Naive thymus-derived CD4-positive, alpha-beta T cell (primary cell): ENCODE measurements at regions of chr6 and their contacts with region 1.

Region 1: GRCh38 chr6:50816115-50816675 is 2.5 kb upstream of the TFAP2B start:
- DNase-seq: peak in 7 of 9 donors; percentile 16 to 55 (median 23)
- ATAC-seq: peak; percentile 57
- H3K4me3 ChIP-seq: peak overlapping the region; percentile 58
- H3K4me3 Mint-ChIP-seq: peak overlapping the region; percentile 66 to 93 (median 87)
- H3K27ac ChIP-seq: no peak overlapping the region
- H3K27ac Mint-ChIP-seq: no peak overlapping the region
- H3K4me1 ChIP-seq: peaks cover 0 to 5% of the 10 kb centered on the region in 2 donors
- H3K4me1 Mint-ChIP-seq: peaks cover 9 to 35% (median 24%) of the 10 kb centered on the region in 7 donors
- H3K27me3 ChIP-seq: peaks cover 0 to 17% of the 10 kb centered on the region in 2 donors
- H3K27me3 Mint-ChIP-seq: peaks cover 45 to 77% (median 68%) of the 10 kb centered on the region in 5 donors

Region 2: GRCh38 chr6:50361641-50362331 is 454.4 kb before region 1 on chr6:
- CTCF ChIA-PET with region 1: no interaction called
- POLR2A ChIA-PET with region 1: no interaction called
- intact Hi-C with region 1: no loop called
- DNase-seq: no peak
- ATAC-seq: no peak
- H3K4me3 ChIP-seq: no peak overlapping the region
- H3K4me3 Mint-ChIP-seq: no peak overlapping the region
- H3K27ac ChIP-seq: no peak overlapping the region
- H3K27ac Mint-ChIP-seq: no peak overlapping the region
- H3K4me1 ChIP-seq: no peaks in the 10 kb centered on the region
- H3K4me1 Mint-ChIP-seq: no peaks in the 10 kb centered on the region
- H3K27me3 ChIP-seq: no peaks in the 10 kb centered on the region
- H3K27me3 Mint-ChIP-seq: no peaks in the 10 kb centered on the region

Region 3: DNA sequence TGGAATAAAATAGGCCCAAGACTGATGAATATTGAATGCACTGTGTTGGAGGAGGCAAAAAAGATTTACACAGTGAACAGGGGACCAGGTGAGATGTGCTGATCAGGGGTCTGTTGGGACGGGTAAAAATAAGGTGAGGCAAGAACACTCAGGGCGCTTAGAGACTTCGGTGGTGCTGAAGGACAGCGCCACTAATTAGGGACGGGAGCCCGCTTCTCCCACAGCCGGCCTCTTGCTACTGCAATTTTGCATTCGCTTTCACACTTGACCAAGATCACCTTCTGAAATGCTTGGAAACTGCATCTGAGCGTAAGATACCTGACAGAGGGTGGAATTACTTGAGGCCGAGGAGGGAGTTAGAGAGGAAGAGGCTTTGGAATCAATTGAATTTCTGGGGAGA is 95.6 kb before region 1 on chr6:
- CTCF ChIA-PET with region 1: no interaction called
- POLR2A ChIA-PET with region 1: no interaction called
- intact Hi-C with region 1: loop called in 1 of 2 experiments (anchors 2 kb)
- DNase-seq: no peak
- ATAC-seq: no peak
- H3K4me3 ChIP-seq: no peak overlapping the region
- H3K4me3 Mint-ChIP-seq: no peak overlapping the region
- H3K27ac ChIP-seq: no peak overlapping the region
- H3K27ac Mint-ChIP-seq: no peak overlapping the region
- H3K4me1 ChIP-seq: no peaks in the 10 kb centered on the region
- H3K4me1 Mint-ChIP-seq: peaks cover 0 to 15% (median 0%) of the 10 kb centered on the region in 7 donors
- H3K27me3 ChIP-seq: peaks cover 0 to 8% of the 10 kb centered on the region in 2 donors
- H3K27me3 Mint-ChIP-seq: peaks cover 76 to 90% (median 81%) of the 10 kb centered on the region in 5 donors

Region 4: DNA sequence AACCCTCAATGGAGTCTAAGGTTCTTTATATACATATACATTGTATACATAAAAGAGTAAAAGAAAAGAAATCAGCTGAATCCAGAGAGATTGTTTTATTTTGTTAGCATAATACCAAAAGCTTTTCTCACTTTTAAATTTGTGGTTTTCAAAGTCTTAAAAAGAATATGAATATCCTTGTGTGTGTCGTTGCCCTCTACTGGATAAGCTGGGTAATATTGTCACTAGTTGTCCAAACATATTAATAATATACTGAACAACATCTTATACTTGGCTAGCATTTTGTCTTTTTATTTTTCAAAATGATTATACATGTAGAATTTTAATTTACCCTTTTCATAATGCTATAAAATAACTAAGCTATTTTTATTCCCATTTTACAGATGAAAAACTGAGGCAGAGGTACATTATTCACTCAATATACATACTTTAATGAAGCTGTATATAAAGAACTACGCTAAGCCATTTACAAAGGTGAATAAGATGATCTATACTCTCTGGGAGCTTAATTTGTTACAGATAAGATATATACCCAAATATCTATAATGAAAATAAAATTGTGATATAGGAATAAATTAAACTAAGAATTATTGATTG is 534.2 kb after region 1 on chr6:
- CTCF ChIA-PET with region 1: no interaction called
- POLR2A ChIA-PET with region 1: no interaction called
- intact Hi-C with region 1: loop called in 1 of 2 experiments (anchors 1 kb)
- DNase-seq: no peak
- ATAC-seq: no peak
- H3K4me3 ChIP-seq: no peak overlapping the region
- H3K4me3 Mint-ChIP-seq: no peak overlapping the region
- H3K27ac ChIP-seq: no peak overlapping the region
- H3K27ac Mint-ChIP-seq: no peak overlapping the region
- H3K4me1 ChIP-seq: no peaks in the 10 kb centered on the region
- H3K4me1 Mint-ChIP-seq: no peaks in the 10 kb centered on the region
- H3K27me3 ChIP-seq: no peaks in the 10 kb centered on the region
- H3K27me3 Mint-ChIP-seq: no peaks in the 10 kb centered on the region

Region 5: DNA sequence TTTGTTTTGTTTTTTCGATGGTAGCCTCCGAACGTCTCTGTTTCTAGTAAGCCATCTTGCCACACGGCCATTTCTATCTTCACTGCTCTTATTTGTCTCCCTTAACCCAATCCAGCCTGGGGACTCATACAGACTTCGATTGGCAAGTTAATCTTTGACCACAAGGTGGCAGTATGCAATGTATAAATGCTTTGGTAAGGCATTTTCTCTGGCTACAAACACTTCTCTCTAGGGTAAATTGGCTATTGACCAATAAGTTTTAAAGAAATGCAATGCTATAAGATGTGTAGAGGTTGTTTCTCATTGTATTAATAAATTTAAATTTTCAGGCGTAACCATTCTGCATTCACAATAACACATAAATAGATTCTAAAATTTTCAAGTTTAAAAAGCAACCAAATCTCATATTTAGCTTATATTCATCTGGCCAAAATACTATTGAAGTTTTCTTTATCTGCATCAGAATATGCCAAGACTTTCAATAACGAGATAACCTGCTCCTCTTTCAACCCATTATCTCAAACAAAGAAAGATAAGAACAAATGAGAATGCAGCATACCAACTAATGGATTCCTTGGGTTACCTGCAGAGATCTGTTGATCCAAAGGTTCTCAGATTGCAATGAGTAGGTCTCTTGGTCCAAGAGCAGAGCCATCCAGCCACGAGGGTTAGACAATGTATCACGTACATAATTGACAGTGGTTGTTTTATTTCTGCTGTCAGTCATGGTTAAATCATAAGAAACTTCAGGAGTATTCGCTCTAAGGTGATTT is 1039.3 kb after region 1 on chr6:
- CTCF ChIA-PET with region 1: no interaction called
- POLR2A ChIA-PET with region 1: no interaction called
- intact Hi-C with region 1: loop called in 1 of 2 experiments (anchors 10 kb)
- DNase-seq: peak in 5 of 9 donors; percentile 8 to 31 (median 15)
- ATAC-seq: no peak
- H3K4me3 ChIP-seq: no peak overlapping the region
- H3K4me3 Mint-ChIP-seq: no peak overlapping the region
- H3K27ac ChIP-seq: no peak overlapping the region
- H3K27ac Mint-ChIP-seq: no peak overlapping the region
- H3K4me1 ChIP-seq: no peaks in the 10 kb centered on the region
- H3K4me1 Mint-ChIP-seq: peaks cover 0 to 2% (median 0%) of the 10 kb centered on the region in 7 donors
- H3K27me3 ChIP-seq: peaks cover 0 to 3% of the 10 kb centered on the region in 2 donors
- H3K27me3 Mint-ChIP-seq: peaks cover 3 to 39% (median 23%) of the 10 kb centered on the region in 5 donors

Region 6: DNA sequence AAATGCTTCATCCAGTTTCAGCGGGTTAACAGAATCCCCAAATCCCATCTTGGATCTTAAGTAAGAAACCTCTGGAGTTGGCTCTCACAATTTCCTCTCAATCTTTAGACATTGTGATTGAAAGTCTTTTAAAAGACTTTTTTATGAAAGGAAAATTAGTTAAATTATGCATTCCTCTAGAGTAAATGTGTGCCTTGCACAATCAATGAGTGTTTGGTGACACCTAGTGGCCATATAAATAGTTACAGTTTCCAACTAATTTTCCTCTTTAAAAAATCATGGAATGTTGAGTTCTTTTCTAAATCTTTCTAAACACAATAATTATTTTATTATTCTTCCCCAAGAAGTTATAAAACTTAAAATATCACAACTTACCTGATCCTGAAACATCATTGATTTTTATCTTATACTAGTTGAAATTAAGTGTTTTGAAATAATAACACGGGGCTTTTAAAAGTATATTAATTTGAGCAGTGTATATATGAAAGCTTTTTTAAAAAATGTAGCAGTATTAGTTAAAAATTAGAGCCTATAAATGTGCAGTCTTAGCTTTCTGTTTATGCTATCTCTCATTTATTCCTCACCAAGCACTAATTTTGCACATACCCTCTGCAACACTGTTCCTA is 1204.9 kb after region 1 on chr6:
- CTCF ChIA-PET with region 1: no interaction called
- POLR2A ChIA-PET with region 1: no interaction called
- intact Hi-C with region 1: loop called in 1 of 2 experiments (anchors 1 kb)
- DNase-seq: peak in 2 of 9 donors; percentile 6 to 15
- ATAC-seq: no peak
- H3K4me3 ChIP-seq: no peak overlapping the region
- H3K4me3 Mint-ChIP-seq: no peak overlapping the region
- H3K27ac ChIP-seq: no peak overlapping the region
- H3K27ac Mint-ChIP-seq: no peak overlapping the region
- H3K4me1 ChIP-seq: no peaks in the 10 kb centered on the region
- H3K4me1 Mint-ChIP-seq: no peaks in the 10 kb centered on the region
- H3K27me3 ChIP-seq: no peaks in the 10 kb centered on the region
- H3K27me3 Mint-ChIP-seq: peaks cover 2 to 16% (median 3%) of the 10 kb centered on the region in 5 donors